ENCODE measurements at regions of chr1 and their contacts with region 1.

Region 1: DNA sequence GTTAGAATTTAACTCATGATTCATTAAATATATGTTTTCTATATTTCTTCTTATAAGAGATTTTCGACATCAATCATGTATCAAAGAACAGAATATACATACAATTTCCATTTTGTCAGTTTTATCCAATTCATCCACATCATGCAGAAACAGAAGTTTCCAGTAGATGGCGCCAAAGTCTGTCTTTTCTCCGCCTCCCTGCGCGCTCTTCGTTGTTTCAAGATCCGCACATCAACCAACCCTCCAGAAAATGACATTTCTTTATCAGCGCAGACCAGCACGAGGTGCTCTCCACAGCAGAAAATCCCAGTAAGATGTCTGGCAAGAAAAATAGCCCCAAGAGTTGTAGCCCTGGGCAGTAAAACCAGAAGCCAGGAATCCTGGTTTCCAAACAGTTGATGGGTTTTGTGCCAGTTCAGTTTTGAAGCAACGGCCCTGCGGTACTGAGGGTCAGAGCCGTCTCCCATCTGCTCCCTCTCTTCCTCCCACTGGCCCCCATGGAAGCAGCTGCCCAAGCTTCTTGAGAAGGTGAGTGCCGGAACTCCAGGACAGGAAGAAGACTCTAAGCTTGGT is 38.6 kb upstream of the GPR137B start:
- ATAC-seq: peak; percentile 2 to 78 (median 60)
- H3K4me3 ChIP-seq: no peak overlapping the region
- H3K27ac ChIP-seq: no peak overlapping the region
- H3K4me1 ChIP-seq: no peaks in the 10 kb centered on the region

Region 2: GRCh38 chr1:236489710-236490377 is 386.1 kb after region 1 on chr1:
- in situ Hi-C with region 1: loop called in 8 of 9 experiments (anchors 10 to 25 kb)
- ATAC-seq: peak in 7 of 8 experiments; percentile 42 to 87 (median 64)
- H3K4me3 ChIP-seq: no peak overlapping the region
- H3K27ac ChIP-seq: no peak overlapping the region
- H3K4me1 ChIP-seq: peaks cover 4 to 8% of the 10 kb centered on the region in 2 donors

Region 3: GRCh38 chr1:237562242-237562823 is 1458.6 kb after region 1 on chr1:
- in situ Hi-C with region 1: loop called in 4 of 9 experiments (anchors 10 to 25 kb)
- ATAC-seq: peak in 5 of 8 experiments; percentile 39 to 79 (median 68)
- H3K4me3 ChIP-seq: no peak overlapping the region
- H3K27ac ChIP-seq: no peak overlapping the region
- H3K4me1 ChIP-seq: no peaks in the 10 kb centered on the region

Measured in motor neuron (in vitro differentiated cells).